ENCODE measurements at regions of chr9 and their contacts with region 1.

Region 1: GRCh38 chr9:88041447-88041846 is 67.1 kb upstream of the CDK20 start:
- DNase-seq: no peak
- H3K4me3 ChIP-seq: no peak overlapping the region
- H3K27ac ChIP-seq: no peak overlapping the region
- H3K4me1 ChIP-seq: no peaks in the 10 kb centered on the region
- H3K27me3 ChIP-seq: no peaks in the 10 kb centered on the region
- CTCF ChIP-seq: peak; percentile 54

Region 2: DNA sequence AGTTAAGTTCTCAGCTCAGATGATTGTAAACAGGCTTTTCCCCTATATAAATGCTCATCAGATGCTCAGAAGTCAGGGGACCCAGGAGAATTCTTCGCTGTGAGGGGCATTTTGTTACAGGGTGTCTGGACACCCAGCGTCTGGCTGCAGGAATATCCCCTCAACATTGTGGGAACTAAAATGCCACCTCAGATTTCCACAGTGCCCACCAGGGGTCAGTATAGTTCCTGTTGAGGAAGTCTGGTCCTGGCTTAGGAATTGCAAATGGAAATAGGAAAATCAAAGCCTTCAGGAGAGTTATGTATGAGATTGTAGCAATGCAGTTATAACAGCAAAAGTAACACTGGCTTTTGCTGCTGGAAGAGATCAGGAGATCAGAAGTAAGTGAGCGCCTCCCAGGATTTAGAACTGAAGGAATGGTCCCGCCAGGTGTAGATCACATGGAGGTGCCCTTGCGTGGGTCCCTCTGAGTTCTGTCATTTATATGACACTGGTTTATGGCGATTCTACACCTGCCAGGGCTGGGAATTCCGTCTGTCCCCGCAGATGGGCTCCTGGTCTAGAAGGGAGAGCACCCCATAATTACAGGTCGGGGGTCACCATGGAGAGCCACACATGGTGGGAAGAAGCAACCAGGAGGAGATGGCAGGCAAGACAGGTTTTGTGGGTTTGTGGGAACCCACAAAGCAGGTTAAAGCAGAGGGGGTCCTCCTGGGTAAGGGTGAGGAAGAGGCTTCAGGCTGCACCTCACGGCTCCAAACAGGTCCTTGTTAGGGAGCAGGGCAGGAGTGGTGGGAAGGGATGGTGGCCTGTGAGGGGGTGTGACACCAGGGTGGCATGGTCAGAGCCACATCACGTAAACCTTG is 362.6 kb before region 1 on chr9:
- CTCF ChIA-PET with region 1: no interaction called
- POLR2A ChIA-PET with region 1: no interaction called
- intact Hi-C with region 1: loop called (anchors 1 kb)
- DNase-seq: peak; percentile 50 to 59
- H3K4me3 ChIP-seq: no peak overlapping the region
- H3K27ac ChIP-seq: no peak overlapping the region
- H3K4me1 ChIP-seq: no peaks in the 10 kb centered on the region
- H3K27me3 ChIP-seq: no peaks in the 10 kb centered on the region
- CTCF ChIP-seq: peak; percentile 88

Region 3: DNA sequence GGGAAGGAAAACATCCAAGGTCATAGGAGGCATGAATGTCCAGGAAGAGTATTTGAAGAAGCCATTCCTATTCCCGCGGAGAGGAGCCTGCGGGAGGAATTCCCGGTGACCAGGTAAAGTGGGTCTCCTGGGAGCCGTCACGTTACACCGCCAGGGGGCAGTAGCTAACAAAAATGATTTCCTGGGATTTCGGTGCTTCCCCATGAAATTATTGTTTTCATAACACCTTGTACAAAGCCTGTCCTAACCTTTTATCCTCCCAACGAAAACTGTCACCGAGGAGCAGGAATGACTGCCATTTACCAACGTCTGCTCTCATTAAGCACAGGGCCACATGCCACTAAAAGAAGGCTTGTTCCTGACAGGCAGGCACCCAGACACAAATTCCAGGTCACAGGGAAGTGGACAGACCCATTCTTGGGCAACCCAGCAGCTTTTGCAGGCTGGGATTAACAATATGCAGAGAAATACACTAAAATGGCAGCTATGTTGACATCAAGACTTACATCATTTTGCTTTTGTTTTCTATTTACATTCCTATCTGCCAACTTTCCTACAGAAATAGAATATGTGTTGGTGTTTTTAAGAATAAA is 356.7 kb before region 1 on chr9:
- CTCF ChIA-PET with region 1: no interaction called
- POLR2A ChIA-PET with region 1: no interaction called
- intact Hi-C with region 1: loop called (anchors 1 kb)
- DNase-seq: peak in 1 of 2 experiments; percentile 64
- H3K4me3 ChIP-seq: no peak overlapping the region
- H3K27ac ChIP-seq: peak overlapping the region; percentile 36; the same call in 1 of the 2 replicates
- H3K4me1 ChIP-seq: 0 out of 2 replicates have a peak, but pooled peaks cover 5% of the 10 kb centered on the region
- H3K27me3 ChIP-seq: no peaks in the 10 kb centered on the region
- CTCF ChIP-seq: peak; percentile 87

Region 4: DNA sequence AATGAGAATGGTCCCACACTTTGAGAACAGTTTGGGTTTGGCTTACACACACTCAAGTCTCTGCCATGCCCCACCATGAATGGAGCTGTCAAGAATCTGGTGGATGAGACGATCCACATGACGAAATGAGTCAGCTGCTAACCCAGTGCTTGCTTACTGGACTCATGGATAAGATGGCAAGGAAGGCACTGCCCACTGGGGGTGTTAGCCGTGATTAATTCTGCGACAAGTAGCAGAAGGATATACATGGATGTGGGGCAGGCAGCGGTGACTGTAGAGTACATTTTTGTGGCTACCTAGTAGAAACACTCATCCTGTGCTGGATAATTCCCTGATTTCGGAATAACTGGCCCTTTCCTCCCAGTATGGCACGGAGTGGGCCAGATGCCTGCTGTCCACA is 19.3 kb after region 1 on chr9:
- CTCF ChIA-PET with region 1: no interaction called
- POLR2A ChIA-PET with region 1: no interaction called
- intact Hi-C with region 1: no loop called
- DNase-seq: no peak
- H3K4me3 ChIP-seq: no peak overlapping the region
- H3K27ac ChIP-seq: no peak overlapping the region
- H3K4me1 ChIP-seq: no peaks in the 10 kb centered on the region
- H3K27me3 ChIP-seq: no peaks in the 10 kb centered on the region
- CTCF ChIP-seq: no peak